ENCODE measurements at regions of chr5 and their contacts with region 1.

Region 1: GRCh38 chr5:141514330-141515133 is 25.7 kb downstream of the PCDHGC5 start:
- DNase-seq: peak; percentile 21 to 24
- H3K4me3 ChIP-seq: peak overlapping the region in 1 of 3 donors; percentile 47
- H3K27ac ChIP-seq: peak overlapping the region; percentile 49 to 91 (median 70)
- H3K4me1 ChIP-seq: peaks cover 14 to 37% of the 10 kb centered on the region in 2 donors
- H3K27me3 ChIP-seq: no peaks in the 10 kb centered on the region
- CTCF ChIP-seq: no peak
- POLR2A ChIP-seq: no peak

Region 2: DNA sequence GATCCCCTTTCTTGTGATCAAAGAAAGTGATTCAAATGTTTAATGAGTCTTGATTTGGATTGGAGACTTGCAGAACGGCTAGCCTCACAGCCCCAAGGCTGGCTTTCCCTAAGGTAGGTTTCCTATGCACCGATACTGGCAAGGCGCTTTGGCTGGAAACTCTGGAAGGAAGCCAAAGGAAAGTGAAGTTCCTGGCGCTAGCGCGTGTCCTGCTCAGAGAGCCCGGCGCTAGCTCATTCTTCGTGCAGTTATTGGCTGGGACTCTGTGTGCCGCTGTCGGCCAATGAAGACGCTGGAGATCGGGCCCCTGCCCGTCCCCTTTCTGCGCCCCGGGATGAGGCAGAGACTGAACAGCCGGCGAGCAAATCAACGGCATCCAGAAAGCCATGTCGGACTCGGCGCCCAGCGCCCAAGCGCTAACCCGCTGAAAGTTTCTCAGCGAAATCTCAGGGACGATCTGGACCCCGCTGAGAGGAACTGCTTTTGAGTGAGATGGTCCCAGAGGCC is 38.9 kb before region 1 on chr5 and contains the start of gene PCDHGC3:
- intact Hi-C with region 1: loop called (anchors 5 kb)
- DNase-seq: peak; percentile 93 to 94
- H3K4me3 ChIP-seq: peak within 1 kb of the TSS; percentile 1 to 71 (median 44)
- H3K27ac ChIP-seq: peak within 1 kb of the TSS; percentile 49 to 86 (median 77)
- H3K4me1 ChIP-seq: peaks cover 14 to 35% of the 10 kb centered on the region in 2 donors
- H3K27me3 ChIP-seq: no peaks in the 10 kb centered on the region
- CTCF ChIP-seq: peak in 4 of 6 experiments; percentile 26 to 58 (median 28)
- POLR2A ChIP-seq: peak in 1 of 2 donors; percentile 71
- total RNA-seq, gene PCDHGC3: 24.7 to 31.5 (median 27.6) TPM

Measured in thyroid gland (tissue), 4 donors.